Endothelial cell of umbilical vein (primary cell): ENCODE measurements at regions of chr18 and their contacts with region 1.

Region 1: GRCh38 chr18:48538531-48539405 is at the start of gene CTIF:
- DNase-seq: peak; percentile 96
- H3K4me3 ChIP-seq: peak within 1 kb of the TSS; percentile 73 to 86 (median 80)
- H3K27ac ChIP-seq: peak within 1 kb of the TSS; percentile 86
- H3K4me1 ChIP-seq: peaks cover 33% of the 10 kb centered on the region
- H3K27me3 ChIP-seq: no peaks in the 10 kb centered on the region
- CTCF ChIP-seq: no peak
- POLR2A ChIP-seq: peak; percentile 87
- total RNA-seq, gene CTIF: 49.4 and 57.7 TPM in 2 replicates

Region 2: DNA sequence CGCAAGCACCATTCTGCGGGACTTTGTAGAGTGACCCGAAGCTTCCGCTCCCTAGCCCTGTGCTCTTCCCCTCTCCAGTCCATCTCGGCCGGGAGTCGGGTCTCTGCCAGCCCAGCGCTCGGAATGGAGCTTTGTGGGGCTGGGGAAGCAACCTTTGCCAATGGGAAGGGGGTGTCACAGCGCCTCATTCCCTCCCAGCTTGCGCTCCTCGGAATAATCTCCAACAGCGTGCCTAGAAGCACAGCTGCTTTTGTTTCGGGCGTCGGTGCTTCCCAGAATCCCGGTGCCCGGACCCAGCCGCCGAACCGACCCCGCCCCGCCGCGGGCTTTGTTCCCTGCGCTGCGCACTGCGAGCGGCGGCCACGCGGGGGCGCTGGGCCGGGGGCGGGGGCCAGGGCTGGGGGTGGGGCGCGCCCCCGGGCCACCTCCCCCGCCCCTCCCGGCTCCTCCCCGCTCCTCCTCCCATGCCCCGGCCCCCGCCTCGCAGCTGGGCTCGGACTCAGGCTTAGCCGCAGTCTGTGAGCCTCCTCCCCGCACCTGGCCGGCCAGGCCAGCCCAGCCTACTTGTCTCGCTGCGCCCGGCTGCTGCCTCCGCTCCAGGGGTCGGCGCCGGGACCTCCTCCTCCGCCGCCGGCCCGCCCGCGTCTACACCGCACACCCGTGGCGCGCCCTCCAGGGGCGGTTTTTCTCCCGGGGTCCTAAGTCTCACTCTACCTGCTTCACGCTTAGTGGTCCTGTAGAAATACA is 530.6 kb before region 1 on chr18:
- CTCF ChIA-PET with region 1: no interaction called
- POLR2A ChIA-PET with region 1: no interaction called
- dilution Hi-C with region 1: no loop called
- intact Hi-C with region 1: loop called (anchors 10 kb)
- DNase-seq: peak; percentile 51
- H3K4me3 ChIP-seq: peak overlapping the region; percentile 48 to 70 (median 62)
- H3K27ac ChIP-seq: peak overlapping the region; percentile 51
- H3K4me1 ChIP-seq: peaks cover 26% of the 10 kb centered on the region
- H3K27me3 ChIP-seq: peaks cover 3 to 7% of the 10 kb centered on the region in 2 experiments
- CTCF ChIP-seq: peak; percentile 31 to 53
- POLR2A ChIP-seq: peak; percentile 66

Region 3: GRCh38 chr18:48230467-48231113 is 308.2 kb before region 1 on chr18:
- CTCF ChIA-PET with region 1: no interaction called
- POLR2A ChIA-PET with region 1: no interaction called
- dilution Hi-C with region 1: no loop called
- intact Hi-C with region 1: no loop called
- DNase-seq: peak; percentile 7
- H3K4me3 ChIP-seq: no peak overlapping the region
- H3K27ac ChIP-seq: no peak overlapping the region
- H3K4me1 ChIP-seq: no peaks in the 10 kb centered on the region
- H3K27me3 ChIP-seq: peaks cover 8 to 16% of the 10 kb centered on the region in 2 experiments
- CTCF ChIP-seq: peak in 1 of 2 donors; percentile 29
- POLR2A ChIP-seq: no peak

Region 4: GRCh38 chr18:48488388-48488850 is 50.3 kb before region 1 on chr18:
- CTCF ChIA-PET with region 1: interaction called, 5 read pairs
- POLR2A ChIA-PET with region 1: no interaction called
- dilution Hi-C with region 1: no loop called
- intact Hi-C with region 1: loop called (anchors 1 kb)
- DNase-seq: peak; percentile 97
- H3K4me3 ChIP-seq: no peak overlapping the region
- H3K27ac ChIP-seq: peak overlapping the region; percentile 57
- H3K4me1 ChIP-seq: peaks cover 21% of the 10 kb centered on the region
- H3K27me3 ChIP-seq: no peaks in the 10 kb centered on the region
- CTCF ChIP-seq: no peak
- POLR2A ChIP-seq: peak; percentile 55

Region 5: DNA sequence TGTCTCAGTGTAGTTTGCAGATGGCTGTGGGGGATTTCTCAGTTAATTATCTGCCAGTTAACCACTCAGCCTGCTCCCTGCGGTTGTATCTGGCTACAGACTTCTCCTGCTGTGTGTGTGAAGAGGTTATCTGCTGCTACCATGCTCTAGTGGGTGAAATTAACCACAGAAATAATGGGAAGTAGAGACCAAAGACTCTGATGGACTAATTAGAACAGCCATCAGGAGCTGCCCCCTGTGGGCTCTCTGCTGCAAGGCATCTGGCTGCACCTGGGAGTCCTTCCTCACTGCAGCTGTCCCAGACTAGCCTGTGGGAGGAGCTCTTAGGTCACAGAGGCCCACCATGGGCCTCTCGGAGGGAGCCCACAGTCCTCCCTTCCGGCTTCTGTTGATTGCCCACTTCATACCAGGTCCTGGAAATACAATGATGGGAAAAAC is 66.7 kb after region 1 on chr18:
- CTCF ChIA-PET with region 1: interaction called, 4 read pairs
- POLR2A ChIA-PET with region 1: interaction called, 5 read pairs
- dilution Hi-C with region 1: no loop called
- intact Hi-C with region 1: loop called (anchors 1 kb)
- DNase-seq: peak; percentile 48
- H3K4me3 ChIP-seq: no peak overlapping the region
- H3K27ac ChIP-seq: no peak overlapping the region
- H3K4me1 ChIP-seq: no peaks in the 10 kb centered on the region
- H3K27me3 ChIP-seq: no peaks in the 10 kb centered on the region
- CTCF ChIP-seq: peak; percentile 45 to 62
- POLR2A ChIP-seq: no peak

Region 6: DNA sequence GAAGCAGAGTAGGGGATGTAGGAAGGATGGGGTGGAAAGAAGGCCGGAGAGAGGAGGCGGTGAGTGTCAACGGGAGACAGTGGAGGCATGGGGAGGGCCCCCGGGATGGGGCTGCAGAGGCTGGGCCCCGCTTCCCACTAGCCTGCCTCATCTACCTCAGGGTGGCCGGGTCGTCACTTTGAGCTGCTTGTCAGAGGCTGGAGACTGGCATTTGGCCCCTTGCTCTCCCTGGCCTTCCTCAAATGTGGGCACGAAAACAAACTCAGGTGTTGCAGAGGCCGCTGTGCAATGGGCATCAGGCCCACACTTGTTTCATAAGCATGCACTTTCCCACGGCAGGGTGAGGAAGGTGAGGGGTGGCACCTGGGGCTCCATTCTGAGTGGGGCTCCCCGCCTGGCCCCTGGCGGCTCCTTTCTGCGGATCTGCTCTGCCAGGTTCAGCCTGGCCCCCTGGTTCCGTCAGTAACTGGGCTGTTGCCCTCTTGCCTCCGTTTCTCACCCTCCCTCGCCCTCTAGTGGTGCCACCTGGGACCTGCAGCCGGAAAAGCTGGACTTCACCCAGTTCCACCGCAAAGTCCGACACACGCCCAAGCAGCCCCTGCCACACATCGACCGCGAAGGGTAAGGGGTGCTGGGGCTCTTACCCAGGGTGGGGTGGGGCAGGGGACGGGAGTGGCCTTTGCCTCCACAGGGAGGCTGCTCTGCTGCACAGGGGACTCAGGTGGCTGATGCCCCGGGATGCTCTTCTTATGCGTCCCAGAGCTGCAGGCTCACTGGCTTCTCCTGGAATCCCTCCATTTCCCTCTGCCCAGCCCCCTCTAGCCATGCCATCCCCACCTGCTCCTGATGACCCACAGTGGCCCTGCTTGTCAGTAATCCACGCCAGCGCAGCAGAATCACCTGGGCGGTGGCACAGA is 125.4 kb after region 1 on chr18:
- CTCF ChIA-PET with region 1: no interaction called
- POLR2A ChIA-PET with region 1: no interaction called
- dilution Hi-C with region 1: no loop called
- intact Hi-C with region 1: loop called (anchors 1 kb)
- DNase-seq: peak; percentile 57
- H3K4me3 ChIP-seq: no peak overlapping the region
- H3K27ac ChIP-seq: no peak overlapping the region
- H3K4me1 ChIP-seq: no peaks in the 10 kb centered on the region
- H3K27me3 ChIP-seq: no peaks in the 10 kb centered on the region
- CTCF ChIP-seq: peak; percentile 84 to 96
- POLR2A ChIP-seq: no peak